ENCODE measurements at regions of chr7 and their contacts with region 1.

Region 1: DNA sequence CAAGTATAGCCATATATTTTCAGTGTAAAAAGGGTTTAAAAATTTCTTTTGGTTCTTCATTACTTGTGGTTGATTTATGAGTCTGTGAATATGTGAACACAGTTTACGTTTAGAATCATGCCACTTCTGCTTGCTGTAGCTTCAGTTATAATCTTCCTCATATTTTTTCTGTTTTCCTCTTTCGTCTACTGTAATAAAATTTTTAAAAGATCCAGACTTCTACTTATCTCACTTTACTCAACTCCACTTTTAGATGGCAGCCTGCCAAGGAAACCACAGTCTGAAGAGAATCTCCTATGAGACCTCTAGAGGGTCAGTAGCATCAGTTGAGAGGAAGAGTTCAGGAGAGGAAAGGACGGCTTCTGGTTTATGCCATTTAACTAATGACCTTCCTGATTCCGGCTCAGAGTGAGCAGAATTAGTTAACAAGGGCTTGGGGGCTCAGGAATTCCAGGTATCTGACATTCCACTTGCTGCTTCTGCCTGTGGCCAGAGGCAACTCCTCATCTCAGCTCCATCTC is 21.4 kb downstream of the CREB5 start:
- DNase-seq: peak in 2 of 5 donors; percentile 32 to 43
- ATAC-seq: peak in 1 of 4 donors; percentile 44
- H3K4me3 ChIP-seq: no peak overlapping the region
- H3K27ac ChIP-seq: no peak overlapping the region
- H3K4me1 ChIP-seq: peaks cover 0 to 13% (median 5%) of the 10 kb centered on the region in 12 donors
- H3K27me3 ChIP-seq: no peaks in the 10 kb centered on the region
- CTCF ChIP-seq: no peak
- POLR2A ChIP-seq: no peak

Region 2: DNA sequence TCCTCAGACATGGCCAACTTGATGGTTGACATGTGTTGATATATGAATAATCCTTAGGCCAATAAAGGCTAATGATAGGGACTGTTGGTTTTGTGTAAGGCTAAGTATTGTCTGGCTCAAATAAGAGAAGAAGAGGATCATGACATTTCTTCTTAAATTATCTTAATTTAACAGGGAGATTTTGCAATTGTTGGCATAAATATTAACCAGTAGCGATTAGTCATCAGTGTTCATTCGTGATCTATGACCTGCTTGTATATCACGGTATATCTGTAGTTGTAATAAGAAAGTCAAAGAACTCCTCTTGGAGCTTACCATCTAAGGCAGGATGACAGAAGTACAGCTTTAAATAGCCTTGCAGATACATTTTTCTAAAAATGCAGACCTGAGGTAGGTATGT is 175.0 kb after region 1 on chr7:
- intact Hi-C with region 1: loop called in 1 of 10 experiments (anchors 10 kb)
- DNase-seq: no peak
- ATAC-seq: no peak
- H3K4me3 ChIP-seq: no peak overlapping the region
- H3K27ac ChIP-seq: no peak overlapping the region
- H3K4me1 ChIP-seq: peaks cover 0 to 46% (median 22%) of the 10 kb centered on the region in 12 donors
- H3K27me3 ChIP-seq: no peaks in the 10 kb centered on the region
- CTCF ChIP-seq: no peak
- POLR2A ChIP-seq: no peak